Right ventricle myocardium superior (tissue), 1 donor: ENCODE measurements at regions of chr19 and their contacts with region 1.

Region 1: GRCh38 chr19:43503501-43504425 is 783 bp downstream of the PHLDB3 start:
- DNase-seq: peak; percentile 99
- ATAC-seq: peak; percentile 99

Region 2: DNA sequence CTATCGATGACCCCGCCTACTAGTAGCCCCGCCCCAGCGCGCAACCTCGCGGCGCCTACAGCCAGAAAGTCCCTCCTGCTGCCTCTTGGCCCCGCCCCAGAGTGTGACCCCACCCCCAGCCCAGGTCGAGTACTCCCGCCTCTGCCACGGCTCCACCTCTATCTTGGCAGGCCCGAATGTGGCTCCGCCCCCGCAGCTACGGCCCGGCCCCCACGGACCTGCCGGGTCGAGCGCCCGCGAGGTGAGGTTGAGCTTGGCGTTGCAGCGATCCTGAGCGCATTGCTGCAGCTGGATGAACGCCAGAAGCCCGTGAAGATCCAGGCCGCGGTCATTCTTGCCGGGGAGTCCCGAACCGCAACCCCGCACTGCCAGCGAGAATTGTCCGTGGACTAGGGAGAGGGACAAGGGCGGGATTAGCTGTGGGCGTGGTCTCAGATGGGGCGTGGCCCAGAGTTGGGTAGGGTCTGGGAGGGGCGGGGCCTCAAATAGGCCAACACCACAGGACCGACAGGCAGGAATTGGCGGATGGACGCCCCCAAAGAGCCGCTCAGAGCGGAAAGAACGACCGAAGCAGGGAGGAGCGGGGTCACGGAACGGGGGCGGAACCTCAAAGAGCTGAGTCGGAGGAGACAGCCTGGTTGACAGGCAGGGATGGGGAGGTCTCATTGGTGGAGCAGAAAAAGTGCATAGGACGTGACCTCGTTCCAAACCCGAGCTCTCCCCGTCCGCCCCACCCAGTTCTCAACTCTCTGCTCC is 40.2 kb before region 1 on chr19:
- intact Hi-C with region 1: loop called (anchors 5 kb)
- DNase-seq: peak; percentile 98
- ATAC-seq: peak; percentile 97